ENCODE measurements at regions of chr22 and their contacts with region 1.

Region 1: DNA sequence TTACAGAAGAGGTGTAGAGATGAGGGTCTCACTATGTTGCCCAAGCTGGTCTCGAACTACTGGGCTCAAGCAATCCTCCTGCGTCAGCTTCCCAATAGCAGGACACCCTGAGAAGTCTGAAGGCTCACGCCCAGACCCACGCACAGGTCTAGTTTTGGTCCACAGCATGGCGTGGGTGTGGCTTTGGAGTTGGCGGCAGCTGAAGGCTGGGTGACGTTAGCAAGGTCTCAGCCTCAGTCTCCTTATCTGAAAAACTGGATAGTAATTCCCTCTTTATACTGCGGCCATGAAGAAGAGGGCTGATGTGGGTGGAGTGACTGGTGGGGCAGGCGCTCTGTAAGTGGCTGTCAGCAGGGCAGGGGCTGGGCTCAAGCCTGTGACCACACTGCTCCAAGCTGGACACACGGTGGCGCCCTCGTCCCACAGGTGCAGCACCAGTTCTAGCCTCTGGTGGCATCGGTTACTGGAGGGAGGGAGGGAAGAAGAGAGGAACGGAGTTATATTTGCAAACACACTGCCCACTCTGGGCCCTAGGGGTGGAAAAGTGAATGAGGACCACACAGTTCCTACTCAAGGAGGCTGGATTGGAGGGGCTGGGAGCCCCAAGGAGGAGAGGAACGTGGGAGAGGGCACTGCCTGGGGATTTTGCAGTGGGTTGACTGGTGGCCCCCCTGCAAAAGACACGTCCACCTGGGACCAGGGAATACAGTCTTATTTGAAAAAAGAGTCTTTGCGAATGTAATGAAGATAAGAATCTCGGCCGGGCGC is 19.6 kb upstream of the CARD10 start:
- DNase-seq: peak; percentile 94 to 96
- ATAC-seq: peak; percentile 97 to 99 (median 98)
- H3K4me3 ChIP-seq: no peak overlapping the region
- H3K27ac ChIP-seq: no peak overlapping the region
- H3K4me1 ChIP-seq: no peaks in the 10 kb centered on the region
- H3K27me3 ChIP-seq: peaks cover 0 to 7% (median 0%) of the 10 kb centered on the region in 3 donors
- CTCF ChIP-seq: peak; percentile 94

Region 2: GRCh38 chr22:37566903-37567820 is 28.4 kb after region 1 on chr22:
- intact Hi-C with region 1: loop called (anchors 1 to 5 kb)
- DNase-seq: peak; percentile 80 to 89
- ATAC-seq: peak; percentile 74 to 88 (median 87)
- H3K4me3 ChIP-seq: no peak overlapping the region
- H3K27ac ChIP-seq: no peak overlapping the region
- H3K4me1 ChIP-seq: peaks cover 28% of the 10 kb centered on the region
- H3K27me3 ChIP-seq: peaks cover 0 to 20% (median 2%) of the 10 kb centered on the region in 3 donors
- CTCF ChIP-seq: peak; percentile 91

Region 3: DNA sequence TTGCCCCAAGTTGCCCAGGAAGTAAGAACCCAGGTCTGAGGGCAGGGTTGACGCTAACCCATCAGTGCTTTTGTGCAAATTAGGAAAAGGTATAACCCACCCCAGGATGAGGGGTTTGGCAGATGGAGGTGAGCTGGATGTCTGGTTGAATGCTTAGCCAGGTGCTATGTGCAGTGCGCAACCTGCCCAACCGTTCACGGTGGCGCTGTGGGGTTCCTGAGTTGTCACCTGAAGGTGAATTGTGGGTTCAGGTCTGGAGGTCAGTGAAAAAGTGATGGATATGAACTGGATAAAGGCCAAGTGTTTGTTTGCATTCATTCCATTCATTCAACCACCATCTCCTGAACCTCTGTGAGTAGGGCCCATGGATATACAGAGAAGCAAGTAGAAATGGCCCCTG is 55.5 kb after region 1 on chr22:
- intact Hi-C with region 1: loop called (anchors 1 to 5 kb)
- DNase-seq: no peak
- ATAC-seq: no peak
- H3K4me3 ChIP-seq: no peak overlapping the region
- H3K27ac ChIP-seq: no peak overlapping the region
- H3K4me1 ChIP-seq: peaks cover 6% of the 10 kb centered on the region
- H3K27me3 ChIP-seq: no peaks in the 10 kb centered on the region
- CTCF ChIP-seq: no peak

Measured in psoas muscle (tissue), 8 donors.